Activated CD4-positive, alpha-beta memory T cell treated with anti-CD3 and anti-CD28 coated beads for 36 hours (primary cell): ENCODE measurements at regions of chr21 and their contacts with region 1.

Region 1: GRCh38 chr21:29195981-29196669 is 65.7 kb downstream of the MAP3K7CL start:
- DNase-seq: peak; percentile 85
- H3K4me3 Mint-ChIP-seq: peak overlapping the region; percentile 70
- H3K27ac Mint-ChIP-seq: peak overlapping the region; percentile 80
- H3K4me1 Mint-ChIP-seq: peaks cover 34% of the 10 kb centered on the region
- H3K27me3 Mint-ChIP-seq: peaks cover 3% of the 10 kb centered on the region

Region 2: GRCh38 chr21:29208682-29209059 is 12.5 kb after region 1 on chr21:
- CTCF ChIA-PET with region 1: interaction called, 5 read pairs
- POLR2A ChIA-PET with region 1: no interaction called
- intact Hi-C with region 1: loop called (anchors 1 kb)
- DNase-seq: no peak
- H3K4me3 Mint-ChIP-seq: no peak overlapping the region
- H3K27ac Mint-ChIP-seq: no peak overlapping the region
- H3K4me1 Mint-ChIP-seq: peaks cover 18% of the 10 kb centered on the region
- H3K27me3 Mint-ChIP-seq: no peaks in the 10 kb centered on the region